ENCODE measurements at regions of chr3 and their contacts with region 1.

Region 1: DNA sequence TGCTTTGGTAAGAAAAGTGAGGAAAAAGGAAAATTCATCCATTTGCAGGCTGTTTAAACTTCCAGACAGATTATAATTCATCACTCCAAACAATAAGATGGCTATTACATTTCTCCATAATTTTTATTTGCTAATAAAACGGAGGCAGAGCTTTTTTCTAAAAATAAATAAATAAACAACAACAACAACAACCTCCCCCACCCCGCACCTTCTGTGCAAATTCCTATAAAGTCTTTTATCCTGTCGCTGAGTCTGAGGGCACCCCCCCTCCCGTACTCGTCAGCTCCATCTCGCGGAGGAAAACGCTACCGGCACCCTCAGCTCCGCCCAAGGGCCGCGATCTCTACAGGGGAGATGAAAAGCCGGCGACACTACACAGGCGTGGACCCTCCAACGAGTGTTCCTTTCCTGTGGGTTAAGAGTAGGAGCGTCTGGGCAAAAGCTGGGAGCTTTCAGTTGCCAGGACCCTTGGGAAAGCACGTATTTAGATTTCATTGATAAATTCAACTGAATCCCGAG is 1.0 kb upstream of the ATP1B3 start:
- DNase-seq: peak; percentile 91
- ATAC-seq: peak; percentile 73
- H3K4me3 Mint-ChIP-seq: peak overlapping the region; percentile 95
- H3K27ac Mint-ChIP-seq: peak overlapping the region; percentile 95
- H3K4me1 Mint-ChIP-seq: peaks cover 25% of the 10 kb centered on the region
- H3K27me3 Mint-ChIP-seq: no peaks in the 10 kb centered on the region
- CTCF ChIP-seq: peak; percentile 87

Region 2: DNA sequence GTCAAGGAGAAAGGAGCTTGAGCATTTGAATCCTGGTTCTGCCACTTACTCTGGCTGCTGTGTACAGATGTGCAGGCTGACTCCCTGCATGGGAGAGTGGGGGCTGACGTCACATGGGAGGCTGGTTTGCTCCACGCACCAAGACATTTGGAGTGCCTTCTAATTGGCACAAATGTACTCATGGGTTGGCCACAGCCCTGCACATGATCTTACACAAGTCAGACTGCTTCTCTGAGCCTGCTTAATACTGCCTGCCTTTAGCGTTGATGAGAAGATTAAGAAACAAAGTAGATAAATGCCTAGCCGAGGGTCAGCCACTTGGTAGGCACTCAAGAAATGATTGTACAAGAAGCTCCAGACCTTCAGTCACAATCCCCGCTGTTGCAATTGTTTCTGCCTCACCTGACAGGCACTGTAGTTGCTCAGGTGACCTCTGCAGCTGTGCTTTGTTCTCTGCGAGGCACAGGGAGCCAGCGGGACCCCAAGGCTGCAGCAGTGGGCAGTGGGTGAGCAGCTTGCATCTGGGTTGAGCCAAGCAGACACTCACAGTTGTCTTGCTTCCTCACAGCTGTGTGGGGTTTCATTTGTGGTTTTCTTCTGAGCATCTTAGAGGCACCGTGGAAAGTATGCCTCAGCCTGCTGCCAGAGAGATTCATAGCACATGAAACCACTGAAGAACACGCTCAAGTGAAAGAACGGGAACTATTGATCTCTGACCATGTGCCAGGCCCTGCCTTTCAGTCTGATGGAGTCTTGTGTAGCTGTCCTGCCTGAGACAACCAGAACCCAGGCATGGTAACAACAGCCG is 79.1 kb before region 1 on chr3:
- CTCF ChIA-PET with region 1: interaction called, 11 read pairs
- POLR2A ChIA-PET with region 1: interaction called, 18 read pairs
- intact Hi-C with region 1: loop called (anchors 5 kb)
- DNase-seq: peak; percentile 94
- ATAC-seq: peak; percentile 80
- H3K4me3 Mint-ChIP-seq: peak overlapping the region; percentile 85
- H3K27ac Mint-ChIP-seq: peak overlapping the region; percentile 99
- H3K4me1 Mint-ChIP-seq: peaks cover 51% of the 10 kb centered on the region
- H3K27me3 Mint-ChIP-seq: no peaks in the 10 kb centered on the region
- CTCF ChIP-seq: no peak

Region 3: GRCh38 chr3:141887051-141887450 is 11.6 kb after region 1 on chr3:
- CTCF ChIA-PET with region 1: interaction called, 10 read pairs
- POLR2A ChIA-PET with region 1: interaction called, 21 read pairs
- intact Hi-C with region 1: no loop called
- DNase-seq: no peak
- ATAC-seq: no peak
- H3K4me3 Mint-ChIP-seq: no peak overlapping the region
- H3K27ac Mint-ChIP-seq: no peak overlapping the region
- H3K4me1 Mint-ChIP-seq: peaks cover 63% of the 10 kb centered on the region
- H3K27me3 Mint-ChIP-seq: no peaks in the 10 kb centered on the region
- CTCF ChIP-seq: no peak

Region 4: GRCh38 chr3:142188846-142189245 is 313.4 kb after region 1 on chr3:
- CTCF ChIA-PET with region 1: no interaction called
- POLR2A ChIA-PET with region 1: no interaction called
- intact Hi-C with region 1: no loop called
- DNase-seq: no peak
- ATAC-seq: no peak
- H3K4me3 Mint-ChIP-seq: no peak overlapping the region
- H3K27ac Mint-ChIP-seq: no peak overlapping the region
- H3K4me1 Mint-ChIP-seq: no peaks in the 10 kb centered on the region
- H3K27me3 Mint-ChIP-seq: no peaks in the 10 kb centered on the region
- CTCF ChIP-seq: no peak